Right ventricle myocardium inferior (tissue), 1 donor: ENCODE measurements at regions of chr12 and their contacts with region 1.

Region 1: DNA sequence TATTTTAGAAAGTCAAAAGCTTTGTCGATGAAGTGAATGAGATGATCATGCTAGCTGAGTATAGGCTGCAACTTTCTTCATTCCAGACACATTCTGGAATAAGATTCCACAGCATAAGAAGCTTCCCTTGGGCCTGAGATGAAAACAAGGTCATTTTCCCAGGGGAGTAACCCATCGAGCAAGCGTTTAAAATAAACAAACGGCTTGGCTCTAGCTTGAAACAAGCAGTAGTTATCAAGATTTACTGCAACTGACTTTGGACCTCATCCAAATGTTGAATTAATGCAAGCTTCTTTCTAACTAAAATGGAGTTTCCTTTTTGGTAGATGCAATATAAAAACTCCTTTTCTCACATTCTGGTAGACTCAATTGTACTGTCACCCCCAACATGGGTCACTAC is 23.0 kb downstream of the KCNJ8 start:
- DNase-seq: no peak
- ATAC-seq: peak; percentile 26

Region 2: GRCh38 chr12:21384261-21384660 is 367.3 kb before region 1 on chr12:
- intact Hi-C with region 1: no loop called
- DNase-seq: no peak
- ATAC-seq: no peak

Region 3: DNA sequence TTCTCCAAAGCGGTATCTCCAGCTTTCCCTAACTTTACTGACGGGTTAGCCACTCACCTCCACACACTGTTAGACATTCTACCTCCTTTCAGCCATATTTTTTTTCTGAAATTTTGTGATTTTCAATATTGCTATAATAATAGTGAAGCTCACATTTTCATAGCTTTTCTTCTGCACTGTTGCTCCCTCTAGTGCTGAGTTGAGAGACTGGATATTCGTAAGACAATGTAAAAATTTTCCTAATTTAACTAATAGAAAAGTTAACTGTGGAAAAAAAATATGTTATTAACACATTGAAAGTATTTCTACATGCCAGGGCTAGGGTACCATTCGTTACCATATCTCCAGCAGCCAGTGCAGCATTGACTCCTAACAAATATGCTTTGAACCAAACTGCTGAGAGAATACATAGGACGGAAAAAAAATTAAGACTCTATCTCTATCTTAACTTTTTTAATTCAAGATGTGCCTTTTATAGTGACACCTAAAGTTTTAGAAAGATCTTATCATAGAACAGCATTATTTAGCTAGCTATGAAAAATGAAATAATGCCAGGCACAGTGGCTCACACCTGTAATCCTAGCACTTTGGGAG is 238.4 kb after region 1 on chr12:
- intact Hi-C with region 1: loop called (anchors 10 kb)
- DNase-seq: no peak
- ATAC-seq: no peak

Region 4: DNA sequence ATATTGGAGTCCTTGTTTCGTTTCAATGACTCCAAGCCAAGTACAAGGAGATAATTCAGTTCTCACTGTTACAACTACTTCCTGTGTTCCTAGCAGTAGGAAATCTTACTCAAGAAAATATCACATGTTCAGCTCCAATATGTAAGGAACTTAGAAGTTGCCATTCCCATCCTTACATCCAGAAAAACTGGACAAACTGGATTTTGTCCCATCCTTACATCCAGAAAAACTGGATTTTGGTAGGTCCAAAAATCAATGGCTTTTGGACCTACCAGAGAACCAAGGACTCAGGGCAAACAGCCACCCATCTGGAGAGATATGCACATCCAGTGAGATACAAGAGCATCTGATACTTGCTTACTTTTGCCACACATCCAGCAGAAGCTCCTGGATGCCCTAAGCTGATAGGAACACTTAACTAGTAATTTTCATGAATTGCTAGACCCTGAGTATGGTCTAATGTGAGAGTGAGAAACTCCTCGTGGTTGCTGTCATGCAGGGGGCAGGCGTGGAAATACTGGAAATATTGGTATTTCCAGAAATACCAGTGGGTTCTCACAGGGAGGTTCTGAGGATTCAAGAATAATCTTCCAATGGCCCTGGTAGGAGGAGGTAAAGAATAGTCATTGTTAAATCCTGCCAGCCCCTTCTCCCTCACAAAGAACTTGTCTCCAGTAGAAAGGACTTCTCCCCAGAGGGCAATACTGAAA is 318.5 kb after region 1 on chr12:
- intact Hi-C with region 1: no loop called
- DNase-seq: no peak
- ATAC-seq: no peak